PC-9 (cell line): ENCODE measurements at regions of chr1 and their contacts with region 1.

Region 1: DNA sequence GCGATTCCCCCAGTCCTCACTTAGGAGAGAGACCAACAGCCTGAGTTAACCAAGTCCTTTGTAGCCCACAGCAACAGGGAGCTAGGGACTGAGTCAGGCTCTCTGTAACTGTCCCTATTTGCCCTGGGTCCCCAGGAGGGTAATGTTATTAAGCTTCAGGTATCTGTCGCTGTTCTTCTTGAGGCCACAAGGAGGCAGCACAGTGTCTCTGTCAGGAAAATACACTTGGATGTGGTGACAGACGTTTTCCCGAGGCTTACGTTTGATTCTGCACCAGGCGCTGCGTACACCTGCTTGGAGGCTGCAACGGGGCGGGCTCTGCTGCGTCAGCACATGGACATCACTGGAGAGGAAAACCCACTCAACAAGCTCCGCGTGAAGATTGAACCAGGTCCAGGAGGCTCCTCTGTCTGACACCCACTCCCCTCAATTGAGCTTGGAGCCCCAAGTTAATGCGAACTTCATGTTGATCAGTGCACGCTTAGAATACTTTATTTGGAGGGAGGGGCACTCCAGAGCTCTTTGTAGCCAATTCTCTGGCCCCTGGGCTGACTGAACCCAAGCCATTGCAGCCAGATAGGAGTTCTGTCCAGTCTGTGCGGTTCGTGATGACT is 10.7 kb upstream of the ELF3 start:
- DNase-seq: peak in 1 of 2 experiments; percentile 60
- H3K4me3 ChIP-seq: no peak overlapping the region
- H3K27ac ChIP-seq: no peak overlapping the region
- H3K4me1 ChIP-seq: no peaks in the 10 kb centered on the region
- H3K27me3 ChIP-seq: no peaks in the 10 kb centered on the region
- CTCF ChIP-seq: peak; percentile 89

Region 2: DNA sequence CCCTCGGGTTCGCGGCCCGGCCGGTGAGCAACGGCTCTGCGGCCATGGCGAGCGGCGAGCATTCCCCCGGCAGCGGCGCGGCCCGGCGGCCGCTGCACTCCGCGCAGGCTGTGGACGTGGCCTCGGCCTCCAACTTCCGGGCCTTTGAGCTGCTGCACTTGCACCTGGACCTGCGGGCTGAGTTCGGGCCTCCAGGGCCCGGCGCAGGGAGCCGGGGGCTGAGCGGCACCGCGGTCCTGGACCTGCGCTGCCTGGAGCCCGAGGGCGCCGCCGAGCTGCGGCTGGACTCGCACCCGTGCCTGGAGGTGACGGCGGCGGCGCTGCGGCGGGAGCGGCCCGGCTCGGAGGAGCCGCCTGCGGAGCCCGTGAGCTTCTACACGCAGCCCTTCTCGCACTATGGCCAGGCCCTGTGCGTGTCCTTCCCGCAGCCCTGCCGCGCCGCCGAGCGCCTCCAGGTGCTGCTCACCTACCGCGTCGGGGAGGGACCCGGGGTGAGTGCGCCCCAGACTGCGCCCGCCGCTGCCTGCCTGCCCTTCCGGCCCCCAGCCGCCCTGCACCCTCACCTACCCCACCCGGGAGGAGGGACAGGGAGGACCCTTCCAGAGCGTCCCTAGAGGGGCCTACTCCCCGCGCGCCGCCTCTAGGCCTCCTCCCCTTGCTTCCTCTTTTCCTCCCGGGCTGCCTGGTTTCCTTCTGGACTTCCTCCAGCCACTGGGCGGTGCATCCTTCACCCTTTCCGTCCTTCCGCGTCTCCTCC is 16.9 kb before region 1 on chr1 and contains the start of gene RNPEP:
- CTCF ChIA-PET with region 1: interaction called, 8 read pairs
- POLR2A ChIA-PET with region 1: interaction called, 11 read pairs
- intact Hi-C with region 1: no loop called
- DNase-seq: peak; percentile 73 to 76
- H3K4me3 ChIP-seq: peak within 1 kb of the TSS; percentile 72
- H3K27ac ChIP-seq: peak within 1 kb of the TSS; percentile 16
- H3K4me1 ChIP-seq: peaks cover 14% of the 10 kb centered on the region
- H3K27me3 ChIP-seq: no peaks in the 10 kb centered on the region
- CTCF ChIP-seq: no peak; the same call in 1 of the 2 replicates
- total RNA-seq, gene RNPEP: 108 and 123 TPM in 2 replicates

Region 3: GRCh38 chr1:202076050-202076511 is 76.3 kb after region 1 on chr1:
- CTCF ChIA-PET with region 1: interaction called, 15 read pairs
- POLR2A ChIA-PET with region 1: no interaction called
- intact Hi-C with region 1: no loop called
- DNase-seq: no peak
- H3K4me3 ChIP-seq: no peak overlapping the region
- H3K27ac ChIP-seq: peak overlapping the region; percentile 41
- H3K4me1 ChIP-seq: peaks cover 37% of the 10 kb centered on the region
- H3K27me3 ChIP-seq: no peaks in the 10 kb centered on the region
- CTCF ChIP-seq: no peak

Region 4: DNA sequence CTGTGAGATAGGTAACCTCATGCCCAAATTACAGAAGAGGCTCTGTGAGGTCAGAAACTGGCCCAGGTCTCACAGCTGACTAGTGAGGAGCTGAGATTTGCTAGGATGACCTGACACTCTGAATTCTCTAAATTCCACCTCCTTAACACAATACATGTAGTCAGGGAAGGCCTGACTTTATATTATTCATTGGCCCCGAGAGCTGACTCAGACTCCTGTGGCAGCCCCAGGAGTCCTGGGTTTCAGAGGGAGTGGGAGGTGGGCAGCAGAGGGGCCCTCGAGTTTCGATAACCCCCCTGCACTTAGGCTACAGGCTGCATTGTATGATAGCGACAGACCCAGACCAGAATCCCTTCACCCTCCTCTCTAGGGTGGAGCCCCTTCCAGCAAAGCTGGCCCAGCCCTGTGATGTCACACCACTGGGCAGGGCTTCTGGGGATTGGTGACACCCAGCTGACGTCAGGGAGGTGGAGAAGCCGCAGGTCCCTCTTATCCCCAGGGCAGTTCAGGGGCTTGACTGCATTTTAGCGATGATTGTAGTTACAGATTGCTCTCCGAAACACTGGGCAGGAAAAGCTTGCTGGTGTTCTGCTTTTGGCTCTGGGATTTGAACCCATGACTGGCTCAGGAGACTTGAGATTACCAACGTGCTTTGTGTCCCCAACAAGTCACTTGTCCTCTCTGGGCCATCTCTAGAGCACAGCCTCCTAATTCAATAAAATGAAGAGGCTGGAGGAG is 106.0 kb after region 1 on chr1:
- CTCF ChIA-PET with region 1: interaction called, 3 read pairs
- POLR2A ChIA-PET with region 1: interaction called, 14 read pairs
- intact Hi-C with region 1: no loop called
- DNase-seq: peak; percentile 91 to 95
- H3K4me3 ChIP-seq: peak overlapping the region; percentile 26; the same call in 1 of the 2 replicates
- H3K27ac ChIP-seq: peak overlapping the region; percentile 99
- H3K4me1 ChIP-seq: peaks cover 76% of the 10 kb centered on the region
- H3K27me3 ChIP-seq: no peaks in the 10 kb centered on the region
- CTCF ChIP-seq: no peak

Region 5: GRCh38 chr1:202135221-202135721 is 135.5 kb after region 1 on chr1:
- CTCF ChIA-PET with region 1: interaction called, 4 read pairs
- POLR2A ChIA-PET with region 1: no interaction called
- intact Hi-C with region 1: loop called (anchors 1 kb)
- DNase-seq: peak; percentile 49 to 50
- H3K4me3 ChIP-seq: no peak overlapping the region
- H3K27ac ChIP-seq: no peak overlapping the region
- H3K4me1 ChIP-seq: peaks cover 12% of the 10 kb centered on the region
- H3K27me3 ChIP-seq: no peaks in the 10 kb centered on the region
- CTCF ChIP-seq: peak; percentile 90